CD8-positive, alpha-beta T cell (primary cell): ENCODE measurements at regions of chr16 and their contacts with region 1.

Region 1: GRCh38 chr16:589658-590159 is at the start of gene RAB40C:
- DNase-seq: peak; percentile 98 to 100 (median 99)
- ATAC-seq: peak; percentile 81
- H3K4me3 ChIP-seq: peak within 1 kb of the TSS; percentile 70 to 98
- H3K4me3 Mint-ChIP-seq: peak within 1 kb of the TSS; percentile 95
- H3K27ac ChIP-seq: peak within 1 kb of the TSS; percentile 84 to 93
- H3K27ac Mint-ChIP-seq: peak within 1 kb of the TSS; percentile 98
- H3K4me1 ChIP-seq: peaks cover 29% of the 10 kb centered on the region
- H3K4me1 Mint-ChIP-seq: peaks cover 40% of the 10 kb centered on the region
- H3K27me3 ChIP-seq: no peaks in the 10 kb centered on the region
- H3K27me3 Mint-ChIP-seq: no peaks in the 10 kb centered on the region
- CTCF ChIP-seq: no peak
- total RNA-seq, gene RAB40C: 3.9 to 5.9 TPM

Region 2: GRCh38 chr16:569445-570254 is 20.1 kb before region 1 on chr16 and contains the start of gene PIGQ:
- CTCF ChIA-PET with region 1: no interaction called
- POLR2A ChIA-PET with region 1: interaction called, 6 read pairs
- intact Hi-C with region 1: loop called (anchors 1 kb)
- DNase-seq: peak; percentile 40 to 81 (median 59)
- ATAC-seq: peak; percentile 77
- H3K4me3 ChIP-seq: peak within 1 kb of the TSS; percentile 66 to 84
- H3K4me3 Mint-ChIP-seq: peak within 1 kb of the TSS; percentile 83
- H3K27ac ChIP-seq: peak within 1 kb of the TSS; percentile 65 to 82
- H3K27ac Mint-ChIP-seq: peak within 1 kb of the TSS; percentile 89
- H3K4me1 ChIP-seq: peaks cover 44% of the 10 kb centered on the region
- H3K4me1 Mint-ChIP-seq: peaks cover 32% of the 10 kb centered on the region
- H3K27me3 ChIP-seq: no peaks in the 10 kb centered on the region
- H3K27me3 Mint-ChIP-seq: no peaks in the 10 kb centered on the region
- CTCF ChIP-seq: no peak
- total RNA-seq, gene PIGQ: 25.9 to 31.0 TPM

Region 3: GRCh38 chr16:684067-684794 is 94.5 kb after region 1 on chr16 and contains the start of gene JMJD8:
- CTCF ChIA-PET with region 1: no interaction called
- POLR2A ChIA-PET with region 1: no interaction called
- intact Hi-C with region 1: loop called (anchors 1 to 2 kb)
- DNase-seq: peak; percentile 88 to 98 (median 97)
- ATAC-seq: peak; percentile 43
- H3K4me3 ChIP-seq: peak within 1 kb of the TSS; percentile 60 to 66
- H3K4me3 Mint-ChIP-seq: peak within 1 kb of the TSS; percentile 78
- H3K27ac ChIP-seq: peak within 1 kb of the TSS; percentile 69 to 80
- H3K27ac Mint-ChIP-seq: peak within 1 kb of the TSS; percentile 72
- H3K4me1 ChIP-seq: peaks cover 39% of the 10 kb centered on the region
- H3K4me1 Mint-ChIP-seq: peaks cover 35% of the 10 kb centered on the region
- H3K27me3 ChIP-seq: no peaks in the 10 kb centered on the region
- H3K27me3 Mint-ChIP-seq: no peaks in the 10 kb centered on the region
- CTCF ChIP-seq: no peak
- total RNA-seq, gene JMJD8: 15.8 to 18.7 TPM

Region 4: GRCh38 chr16:788394-789126 is 198.9 kb after region 1 on chr16 and contains the start of gene CHTF18:
- CTCF ChIA-PET with region 1: no interaction called
- POLR2A ChIA-PET with region 1: no interaction called
- intact Hi-C with region 1: loop called in 1 of 2 experiments (anchors 5 kb)
- DNase-seq: peak; percentile 88 to 96 (median 92)
- ATAC-seq: peak; percentile 98
- H3K4me3 ChIP-seq: peak within 1 kb of the TSS; percentile 81 to 97
- H3K4me3 Mint-ChIP-seq: peak within 1 kb of the TSS; percentile 84
- H3K27ac ChIP-seq: peak within 1 kb of the TSS; percentile 10 to 53
- H3K27ac Mint-ChIP-seq: peak within 1 kb of the TSS; percentile 49
- H3K4me1 ChIP-seq: peaks cover 19% of the 10 kb centered on the region
- H3K4me1 Mint-ChIP-seq: peaks cover 7% of the 10 kb centered on the region
- H3K27me3 ChIP-seq: no peaks in the 10 kb centered on the region
- H3K27me3 Mint-ChIP-seq: no peaks in the 10 kb centered on the region
- CTCF ChIP-seq: no peak
- total RNA-seq, gene CHTF18: 34.4 to 38.4 TPM